Activated CD4-positive, alpha-beta memory T cell treated with anti-CD3 and anti-CD28 coated beads for 36 hours (primary cell): ENCODE measurements at regions of chr10 and their contacts with region 1.

Region 1: DNA sequence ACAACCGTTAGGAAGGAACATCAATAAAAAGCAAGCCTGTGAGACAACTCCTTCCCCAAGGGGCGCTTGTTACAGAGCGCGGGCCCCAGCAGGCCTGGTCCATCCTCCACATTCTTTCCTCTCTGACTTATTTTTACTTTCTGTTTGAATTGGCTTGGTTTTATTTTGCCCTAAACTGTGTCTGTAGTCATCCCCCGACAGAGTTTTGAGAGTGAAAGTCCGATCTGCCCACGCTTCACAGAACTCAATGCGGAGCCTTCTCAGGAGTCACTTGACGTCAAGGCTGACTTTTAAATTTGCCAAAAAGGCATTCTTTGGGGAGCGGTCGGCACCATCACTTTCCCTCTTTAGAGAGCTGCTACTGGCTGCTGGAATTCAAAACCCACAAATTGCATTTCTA is 150.1 kb upstream of the KLF6 start:
- DNase-seq: peak; percentile 95
- H3K4me3 Mint-ChIP-seq: peak overlapping the region; percentile 42
- H3K27ac Mint-ChIP-seq: peak overlapping the region; percentile 92
- H3K4me1 Mint-ChIP-seq: peaks cover 49% of the 10 kb centered on the region
- H3K27me3 Mint-ChIP-seq: no peaks in the 10 kb centered on the region

Region 2: GRCh38 chr10:3720228-3721019 is 214.7 kb before region 1 on chr10:
- CTCF ChIA-PET with region 1: no interaction called
- POLR2A ChIA-PET with region 1: no interaction called
- intact Hi-C with region 1: no loop called
- DNase-seq: no peak
- H3K4me3 Mint-ChIP-seq: no peak overlapping the region
- H3K27ac Mint-ChIP-seq: no peak overlapping the region
- H3K4me1 Mint-ChIP-seq: peaks cover 6% of the 10 kb centered on the region
- H3K27me3 Mint-ChIP-seq: no peaks in the 10 kb centered on the region

Region 3: GRCh38 chr10:3805791-3806461 is 129.2 kb before region 1 on chr10:
- CTCF ChIA-PET with region 1: no interaction called
- POLR2A ChIA-PET with region 1: interaction called, 14 read pairs
- intact Hi-C with region 1: loop called (anchors 1 kb)
- DNase-seq: peak; percentile 72
- H3K4me3 Mint-ChIP-seq: peak overlapping the region; percentile 68
- H3K27ac Mint-ChIP-seq: no peak overlapping the region
- H3K4me1 Mint-ChIP-seq: peaks cover 62% of the 10 kb centered on the region
- H3K27me3 Mint-ChIP-seq: no peaks in the 10 kb centered on the region

Region 4: DNA sequence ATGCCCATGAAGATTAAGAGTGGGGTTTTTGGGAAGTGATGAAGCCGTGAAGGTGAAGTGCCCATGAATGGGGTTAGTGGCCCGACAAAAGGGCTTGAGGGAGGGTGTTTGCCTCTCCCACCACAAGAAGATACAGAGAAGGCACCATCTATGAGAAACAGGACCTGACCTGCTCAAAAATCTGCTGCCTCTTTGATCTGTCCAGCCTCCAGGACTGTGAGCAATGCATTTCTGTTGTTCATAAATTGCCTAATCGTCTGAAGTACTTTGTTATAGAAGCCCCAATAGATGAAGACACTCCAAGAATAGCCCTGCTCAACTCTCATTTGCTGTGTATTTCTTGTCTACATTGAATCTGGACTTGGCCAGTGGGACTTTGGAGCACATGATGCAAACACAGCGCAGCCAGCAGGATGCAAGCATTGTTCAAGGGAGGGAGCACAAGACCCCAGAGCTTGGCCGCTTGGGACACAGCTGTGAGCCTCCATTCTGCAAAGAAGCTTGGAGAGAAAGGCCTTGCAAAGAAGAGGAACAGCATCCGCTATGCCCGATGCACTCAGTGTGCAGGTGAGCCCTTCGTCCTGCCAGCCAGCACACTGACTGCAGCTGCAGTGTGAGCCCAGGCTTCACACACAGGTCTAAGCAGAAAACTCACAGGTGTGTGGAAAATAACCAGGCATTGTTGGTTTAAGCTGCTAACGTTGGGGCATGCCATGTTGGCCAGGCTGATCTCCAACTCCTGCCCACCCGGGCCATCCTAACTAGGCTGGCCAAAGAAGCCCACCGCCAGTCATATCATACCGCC is 76.9 kb before region 1 on chr10:
- CTCF ChIA-PET with region 1: no interaction called
- POLR2A ChIA-PET with region 1: no interaction called
- intact Hi-C with region 1: no loop called
- DNase-seq: no peak
- H3K4me3 Mint-ChIP-seq: no peak overlapping the region
- H3K27ac Mint-ChIP-seq: no peak overlapping the region
- H3K4me1 Mint-ChIP-seq: peaks cover 19% of the 10 kb centered on the region
- H3K27me3 Mint-ChIP-seq: no peaks in the 10 kb centered on the region

Region 5: DNA sequence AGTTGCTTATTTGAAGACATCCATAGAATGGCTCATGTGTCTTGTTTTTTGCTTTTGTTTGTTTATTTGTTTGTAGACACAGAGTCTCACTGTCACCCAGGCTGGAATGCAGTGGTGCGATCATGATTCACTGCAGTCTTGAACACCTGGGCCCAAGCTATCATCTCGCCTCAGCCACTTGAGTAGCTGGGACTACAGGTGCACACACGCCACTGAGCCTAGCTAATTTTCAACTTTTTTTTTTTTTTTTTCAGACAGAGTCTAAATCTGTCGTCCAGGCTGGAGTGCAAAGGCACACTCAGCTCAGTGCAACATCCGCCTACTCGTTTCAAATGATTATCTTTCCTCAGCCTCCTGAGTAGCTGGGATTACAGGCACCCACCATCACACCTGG is 66.9 kb before region 1 on chr10:
- CTCF ChIA-PET with region 1: no interaction called
- POLR2A ChIA-PET with region 1: interaction called, 4 read pairs
- intact Hi-C with region 1: loop called (anchors 1 kb)
- DNase-seq: no peak
- H3K4me3 Mint-ChIP-seq: no peak overlapping the region
- H3K27ac Mint-ChIP-seq: peak overlapping the region; percentile 93
- H3K4me1 Mint-ChIP-seq: peaks cover 76% of the 10 kb centered on the region
- H3K27me3 Mint-ChIP-seq: no peaks in the 10 kb centered on the region

Region 6: GRCh38 chr10:3873728-3874461 is 61.2 kb before region 1 on chr10:
- CTCF ChIA-PET with region 1: no interaction called
- POLR2A ChIA-PET with region 1: interaction called, 4 read pairs
- intact Hi-C with region 1: loop called (anchors 1 kb)
- DNase-seq: no peak
- H3K4me3 Mint-ChIP-seq: no peak overlapping the region
- H3K27ac Mint-ChIP-seq: peak overlapping the region; percentile 87
- H3K4me1 Mint-ChIP-seq: peaks cover 72% of the 10 kb centered on the region
- H3K27me3 Mint-ChIP-seq: no peaks in the 10 kb centered on the region

Region 7: GRCh38 chr10:3902054-3902808 is 32.9 kb before region 1 on chr10:
- CTCF ChIA-PET with region 1: interaction called, 3 read pairs
- POLR2A ChIA-PET with region 1: interaction called, 3 read pairs
- intact Hi-C with region 1: loop called (anchors 2 kb)
- DNase-seq: peak; percentile 69
- H3K4me3 Mint-ChIP-seq: no peak overlapping the region
- H3K27ac Mint-ChIP-seq: peak overlapping the region; percentile 79
- H3K4me1 Mint-ChIP-seq: peaks cover 45% of the 10 kb centered on the region
- H3K27me3 Mint-ChIP-seq: no peaks in the 10 kb centered on the region

Region 8: GRCh38 chr10:3948843-3949242 is 13.7 kb after region 1 on chr10:
- CTCF ChIA-PET with region 1: no interaction called
- POLR2A ChIA-PET with region 1: interaction called, 8 read pairs
- intact Hi-C with region 1: loop called (anchors 1 kb)
- DNase-seq: peak; percentile 88
- H3K4me3 Mint-ChIP-seq: peak overlapping the region; percentile 66
- H3K27ac Mint-ChIP-seq: peak overlapping the region; percentile 83
- H3K4me1 Mint-ChIP-seq: peaks cover 58% of the 10 kb centered on the region
- H3K27me3 Mint-ChIP-seq: no peaks in the 10 kb centered on the region

Region 9: DNA sequence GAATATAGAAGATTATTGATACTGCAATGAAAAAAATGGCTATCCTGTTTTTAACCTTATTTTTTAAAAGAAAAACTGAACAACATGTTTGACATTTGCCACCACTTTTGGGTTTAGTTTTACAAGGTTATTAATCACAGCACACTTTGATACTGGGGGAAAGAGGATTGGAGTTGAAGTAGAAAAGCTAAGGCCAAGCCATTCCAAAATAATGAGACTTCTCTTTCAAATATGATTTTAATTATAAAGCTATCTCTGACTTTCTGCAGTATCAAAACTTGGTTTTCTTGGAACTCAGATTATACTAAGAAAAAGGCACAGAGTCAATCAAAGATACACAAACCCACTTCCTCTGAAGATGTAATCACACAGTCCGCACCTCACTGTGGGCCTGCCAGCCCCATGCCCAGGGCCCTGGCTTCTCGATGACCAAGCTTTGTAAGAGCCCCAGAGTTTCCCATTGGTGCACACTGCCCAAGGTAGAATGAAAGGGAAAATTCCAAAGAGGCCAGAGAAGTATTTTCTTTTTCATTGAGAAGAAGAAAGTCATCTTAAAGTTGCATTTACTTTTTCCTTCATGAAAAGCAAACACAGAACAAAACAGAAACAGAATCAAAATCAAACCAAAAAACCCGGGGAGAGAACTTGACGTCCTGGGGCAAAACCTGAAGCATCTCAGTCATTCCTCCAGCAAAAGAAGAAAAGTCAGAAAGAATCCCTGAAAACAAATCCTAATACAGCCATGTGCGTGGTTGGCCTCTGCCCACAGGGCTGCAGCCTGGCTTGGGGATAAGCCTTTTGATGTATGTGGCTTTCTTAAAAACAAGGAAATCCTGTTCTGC is 37.5 kb after region 1 on chr10:
- CTCF ChIA-PET with region 1: no interaction called
- POLR2A ChIA-PET with region 1: no interaction called
- intact Hi-C with region 1: loop called (anchors 2 kb)
- DNase-seq: peak; percentile 68
- H3K4me3 Mint-ChIP-seq: peak overlapping the region; percentile 66
- H3K27ac Mint-ChIP-seq: peak overlapping the region; percentile 96
- H3K4me1 Mint-ChIP-seq: peaks cover 49% of the 10 kb centered on the region
- H3K27me3 Mint-ChIP-seq: no peaks in the 10 kb centered on the region